Dendritic cell treated with granulocyte-macrophage colony-stimulating factor and Interleukin-4, amounts not matched to agents 40 ng/mL and 50 ng/mL, for 4 days (primary cell): ENCODE measurements at regions of chr4 and their contacts with region 1.

Region 1: GRCh38 chr4:182806259-182807252 is 110.6 kb downstream of the DCTD start:
- H3K4me3 Mint-ChIP-seq: peak overlapping the region; percentile 81
- H3K27ac Mint-ChIP-seq: peak overlapping the region; percentile 23
- H3K4me1 Mint-ChIP-seq: peaks cover 11% of the 10 kb centered on the region
- H3K27me3 Mint-ChIP-seq: peaks cover 12% of the 10 kb centered on the region

Region 2: GRCh38 chr4:181143250-181143854 is 1663.2 kb before region 1 on chr4:
- intact Hi-C with region 1: loop called (anchors 10 kb)
- H3K4me3 Mint-ChIP-seq: no peak overlapping the region
- H3K27ac Mint-ChIP-seq: no peak overlapping the region
- H3K4me1 Mint-ChIP-seq: no peaks in the 10 kb centered on the region
- H3K27me3 Mint-ChIP-seq: no peaks in the 10 kb centered on the region

Region 3: DNA sequence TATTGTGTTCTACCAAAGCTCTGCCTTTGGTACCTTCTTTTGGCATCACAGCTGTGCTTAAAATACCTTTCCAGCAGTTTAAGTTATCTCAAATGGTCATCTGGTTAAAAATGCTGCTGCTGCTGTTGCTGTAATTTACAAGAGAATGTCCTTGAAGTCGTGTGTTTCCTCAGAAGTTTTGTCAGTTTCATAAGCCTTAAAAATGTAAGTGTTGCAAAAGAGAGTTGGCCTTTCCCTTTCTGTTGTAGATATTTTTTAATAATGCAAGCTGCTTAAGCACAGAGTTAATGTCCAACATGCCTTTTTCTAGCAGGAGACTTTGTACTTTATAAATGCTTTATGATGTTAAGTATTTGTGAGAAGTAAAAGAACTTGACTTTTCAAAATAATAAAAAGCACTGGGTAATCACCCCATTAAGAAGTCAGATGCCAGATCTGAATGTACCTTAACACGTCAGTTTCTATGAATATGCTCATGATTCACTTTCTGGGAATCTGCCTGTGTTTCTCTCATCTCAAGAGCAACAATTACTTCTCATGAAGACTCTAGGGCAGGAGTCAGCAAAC is 598.6 kb before region 1 on chr4:
- intact Hi-C with region 1: no loop called
- H3K4me3 Mint-ChIP-seq: no peak overlapping the region
- H3K27ac Mint-ChIP-seq: no peak overlapping the region
- H3K4me1 Mint-ChIP-seq: no peaks in the 10 kb centered on the region
- H3K27me3 Mint-ChIP-seq: no peaks in the 10 kb centered on the region

Region 4: DNA sequence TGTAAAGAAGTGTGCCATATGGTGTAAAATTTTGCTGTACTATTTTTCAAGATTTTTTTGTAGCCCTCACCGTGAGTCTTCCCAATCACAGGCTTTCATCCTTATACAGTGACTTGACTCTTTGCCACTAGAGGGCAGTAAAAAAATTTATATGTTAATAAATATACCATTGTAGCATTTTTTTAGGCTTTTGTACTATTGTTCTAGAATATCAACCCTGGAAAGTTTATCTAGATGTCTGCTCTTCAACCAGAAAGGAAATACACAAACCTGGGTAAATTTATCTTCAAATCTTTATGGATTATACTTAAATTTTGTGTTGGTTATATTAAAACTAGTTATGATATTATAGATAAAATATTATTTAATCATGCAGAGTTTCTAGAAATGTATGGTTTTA is 328.1 kb before region 1 on chr4:
- intact Hi-C with region 1: loop called (anchors 2 kb)
- H3K4me3 Mint-ChIP-seq: no peak overlapping the region
- H3K27ac Mint-ChIP-seq: no peak overlapping the region
- H3K4me1 Mint-ChIP-seq: no peaks in the 10 kb centered on the region
- H3K27me3 Mint-ChIP-seq: no peaks in the 10 kb centered on the region